Activated B cell treated with CpG ODN at 0.5 μM for 24 hours (primary cell): ENCODE measurements at regions of chr11 and their contacts with region 1.

Region 1: GRCh38 chr11:79493555-79494171 is 52.8 kb upstream of the TENM4 start:
- DNase-seq: peak; percentile 40
- ATAC-seq: peak; percentile 77
- H3K4me3 Mint-ChIP-seq: no peak overlapping the region
- H3K27ac Mint-ChIP-seq: no peak overlapping the region
- H3K4me1 Mint-ChIP-seq: no peaks in the 10 kb centered on the region
- H3K27me3 Mint-ChIP-seq: peaks cover 9% of the 10 kb centered on the region
- CTCF ChIP-seq: no peak

Region 2: GRCh38 chr11:78645226-78646202 is 848.1 kb before region 1 on chr11:
- CTCF ChIA-PET with region 1: interaction called, 18 read pairs
- POLR2A ChIA-PET with region 1: no interaction called
- intact Hi-C with region 1: no loop called
- DNase-seq: peak; percentile 52
- ATAC-seq: peak; percentile 74
- H3K4me3 Mint-ChIP-seq: no peak overlapping the region
- H3K27ac Mint-ChIP-seq: no peak overlapping the region
- H3K4me1 Mint-ChIP-seq: no peaks in the 10 kb centered on the region
- H3K27me3 Mint-ChIP-seq: peaks cover 8% of the 10 kb centered on the region
- CTCF ChIP-seq: peak; percentile 98

Region 3: DNA sequence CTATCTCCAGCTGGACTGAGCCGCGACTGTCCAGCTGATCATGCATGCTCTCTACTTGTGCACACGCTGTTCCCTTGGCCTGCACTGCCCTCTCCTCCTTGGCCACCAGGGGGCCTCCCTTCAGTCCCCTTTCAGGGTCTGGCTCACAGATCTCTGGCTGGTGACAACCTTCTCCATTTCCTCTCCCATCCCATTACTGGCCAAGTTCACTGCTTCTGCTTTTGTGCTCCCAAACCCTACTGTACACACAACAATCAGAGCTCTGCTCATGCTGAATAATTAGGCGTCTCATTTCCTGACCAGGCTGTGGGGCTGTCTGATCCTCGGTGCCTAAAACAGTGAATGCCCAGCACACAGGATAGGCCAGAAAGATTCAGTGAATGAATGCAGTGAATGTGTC is 695.0 kb before region 1 on chr11:
- CTCF ChIA-PET with region 1: no interaction called
- POLR2A ChIA-PET with region 1: no interaction called
- intact Hi-C with region 1: loop called (anchors 5 kb)
- DNase-seq: no peak
- ATAC-seq: no peak
- H3K4me3 Mint-ChIP-seq: no peak overlapping the region
- H3K27ac Mint-ChIP-seq: no peak overlapping the region
- H3K4me1 Mint-ChIP-seq: no peaks in the 10 kb centered on the region
- H3K27me3 Mint-ChIP-seq: no peaks in the 10 kb centered on the region
- CTCF ChIP-seq: no peak

Region 4: DNA sequence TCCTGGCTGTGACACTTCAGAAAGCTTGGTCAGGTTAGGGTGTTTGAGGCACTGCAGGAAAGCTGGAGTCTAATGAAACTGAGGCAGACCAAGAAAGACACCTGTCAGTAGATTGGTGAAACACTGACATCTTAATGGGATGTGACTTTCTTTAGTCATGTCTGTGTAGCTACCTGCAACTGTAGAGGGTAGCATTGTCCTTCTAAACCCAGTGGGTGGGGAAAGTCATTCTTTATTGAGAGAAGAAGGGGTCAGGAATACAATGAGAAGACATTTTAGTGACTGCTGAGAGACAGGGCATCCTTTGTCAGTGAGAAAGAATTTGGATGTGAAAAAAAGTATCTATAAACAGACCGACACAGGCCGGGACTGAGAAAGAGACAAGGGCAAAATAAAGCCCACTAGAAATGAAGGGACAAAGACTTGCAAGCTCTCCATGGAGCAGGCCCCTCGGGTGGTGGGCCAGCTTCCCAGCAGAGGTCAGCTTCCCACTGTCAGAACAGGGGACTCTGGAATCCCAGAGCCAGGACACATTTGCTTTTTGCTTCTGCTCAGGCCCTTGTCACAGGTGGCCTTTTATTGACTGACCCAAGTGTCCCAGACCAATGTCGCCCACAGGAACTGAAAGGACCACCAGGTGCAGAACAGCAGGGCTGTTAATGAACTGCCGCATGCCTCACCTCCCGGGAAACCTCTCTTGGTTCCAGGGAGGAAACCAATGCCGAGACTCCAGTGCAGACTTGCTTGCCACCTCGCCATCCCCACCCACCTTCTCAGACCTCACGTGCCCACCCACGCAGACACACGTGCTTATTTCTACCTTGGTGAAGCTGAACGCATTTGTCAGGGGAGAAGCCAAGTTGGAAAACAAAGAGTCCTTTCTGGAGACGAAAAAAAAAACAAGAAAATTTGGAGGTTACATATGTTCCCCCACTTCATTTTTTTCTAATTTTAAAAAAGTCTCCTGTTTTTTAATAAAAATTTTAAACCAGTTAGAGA is 265.6 kb before region 1 on chr11:
- CTCF ChIA-PET with region 1: no interaction called
- POLR2A ChIA-PET with region 1: no interaction called
- intact Hi-C with region 1: loop called (anchors 5 kb)
- DNase-seq: no peak
- ATAC-seq: no peak
- H3K4me3 Mint-ChIP-seq: no peak overlapping the region
- H3K27ac Mint-ChIP-seq: no peak overlapping the region
- H3K4me1 Mint-ChIP-seq: no peaks in the 10 kb centered on the region
- H3K27me3 Mint-ChIP-seq: peaks cover 5% of the 10 kb centered on the region
- CTCF ChIP-seq: no peak

Region 5: DNA sequence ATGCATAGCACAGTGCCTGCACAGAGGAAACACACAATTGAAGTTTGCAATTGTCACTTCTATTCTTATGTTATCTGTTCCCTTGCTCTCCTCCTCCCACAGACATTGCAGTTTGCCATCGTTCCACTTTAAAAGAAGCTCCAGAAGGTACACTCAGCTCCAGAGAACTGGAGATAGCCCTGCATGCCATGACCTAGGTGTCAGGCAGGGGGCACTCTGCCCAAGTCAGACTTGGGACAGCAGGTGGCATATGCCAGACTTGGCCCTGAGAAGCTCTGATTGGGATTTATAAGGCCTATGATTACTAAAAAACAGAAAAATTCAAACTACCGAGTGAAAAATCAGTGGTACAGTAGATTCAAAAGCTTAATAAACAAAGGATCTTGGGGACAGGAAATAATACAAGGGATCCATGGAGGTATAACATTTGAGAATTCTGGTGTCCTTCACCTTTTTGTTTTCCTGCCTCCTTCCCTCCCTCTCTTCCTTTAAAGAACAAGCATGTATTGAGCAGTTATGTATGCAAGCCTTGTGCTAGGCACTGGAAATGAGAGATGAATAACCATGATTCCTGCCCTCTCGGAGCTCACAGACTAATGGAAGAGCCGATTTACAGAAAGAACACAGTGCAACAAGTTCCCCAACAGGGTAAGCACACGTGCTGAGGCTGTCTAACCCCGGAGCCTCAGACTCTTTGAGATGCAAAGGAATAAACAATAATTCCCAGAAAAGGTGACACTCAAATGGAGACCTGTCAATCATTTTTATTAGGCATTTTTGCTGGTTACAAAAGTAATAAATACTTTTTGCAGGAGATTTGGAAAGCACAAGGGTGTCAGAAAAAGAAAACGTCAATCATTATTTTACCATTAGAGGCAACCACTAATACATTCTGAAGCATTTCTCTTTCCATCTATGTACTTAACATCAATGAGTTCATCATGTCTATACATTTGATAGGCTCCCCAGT is 92.7 kb before region 1 on chr11:
- CTCF ChIA-PET with region 1: interaction called, 106 read pairs
- POLR2A ChIA-PET with region 1: no interaction called
- intact Hi-C with region 1: loop called (anchors 1 kb)
- DNase-seq: no peak
- ATAC-seq: peak; percentile 61
- H3K4me3 Mint-ChIP-seq: no peak overlapping the region
- H3K27ac Mint-ChIP-seq: no peak overlapping the region
- H3K4me1 Mint-ChIP-seq: peaks cover 8% of the 10 kb centered on the region
- H3K27me3 Mint-ChIP-seq: no peaks in the 10 kb centered on the region
- CTCF ChIP-seq: no peak

Region 6: GRCh38 chr11:79440441-79441194 is 53.0 kb before region 1 on chr11 and contains the start of gene TENM4:
- CTCF ChIA-PET with region 1: interaction called, 3 read pairs
- POLR2A ChIA-PET with region 1: no interaction called
- intact Hi-C with region 1: loop called (anchors 1 kb)
- DNase-seq: peak; percentile 59
- ATAC-seq: peak; percentile 78
- H3K4me3 Mint-ChIP-seq: peak within 1 kb of the TSS; percentile 84
- H3K27ac Mint-ChIP-seq: peak within 1 kb of the TSS; percentile 87
- H3K4me1 Mint-ChIP-seq: peaks cover 44% of the 10 kb centered on the region
- H3K27me3 Mint-ChIP-seq: peaks cover 32% of the 10 kb centered on the region
- CTCF ChIP-seq: no peak
- total RNA-seq, gene TENM4: 1.9 and 2.4 TPM in 2 replicates

Region 7: DNA sequence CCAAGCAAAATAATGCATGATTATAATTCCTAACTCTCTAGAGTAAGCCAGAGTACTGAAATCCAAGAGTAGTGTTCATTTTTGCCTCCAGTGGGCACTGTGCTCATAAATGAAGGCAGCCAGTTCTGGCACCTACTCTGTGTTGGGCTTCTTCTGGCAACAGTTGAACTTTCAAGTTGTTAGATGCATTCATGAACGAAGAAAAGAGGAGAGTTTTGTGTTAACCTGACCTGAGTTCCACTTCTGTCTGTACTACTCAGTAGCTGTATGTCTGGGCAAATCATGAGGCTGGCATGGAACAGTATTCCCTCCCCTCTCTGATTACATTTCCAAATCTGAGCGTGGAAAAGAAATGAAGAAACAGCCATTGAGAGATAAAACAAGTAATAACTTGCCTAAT is 32.5 kb before region 1 on chr11:
- CTCF ChIA-PET with region 1: interaction called, 6 read pairs
- POLR2A ChIA-PET with region 1: no interaction called
- intact Hi-C with region 1: loop called (anchors 1 kb)
- DNase-seq: no peak
- ATAC-seq: peak; percentile 45
- H3K4me3 Mint-ChIP-seq: no peak overlapping the region
- H3K27ac Mint-ChIP-seq: no peak overlapping the region
- H3K4me1 Mint-ChIP-seq: no peaks in the 10 kb centered on the region
- H3K27me3 Mint-ChIP-seq: peaks cover 12% of the 10 kb centered on the region
- CTCF ChIP-seq: no peak